ENCODE measurements at regions of chr5 and their contacts with region 1.

Region 1: DNA sequence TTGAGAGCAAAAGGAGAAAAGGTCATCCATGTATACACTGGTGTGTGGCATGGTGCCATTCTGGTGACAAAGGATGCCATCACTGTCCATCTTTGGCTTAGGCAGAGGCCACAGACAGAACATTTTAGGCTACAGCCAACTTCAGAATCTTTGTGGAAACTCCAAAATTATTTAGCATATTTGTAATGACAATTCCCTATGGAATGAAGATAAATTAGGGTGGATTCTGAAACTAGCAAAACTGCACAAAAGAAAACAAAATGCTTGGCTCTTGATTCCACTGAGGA is 92.5 kb downstream of the FBXW11 start:
- DNase-seq: no peak
- H3K4me3 ChIP-seq: no peak overlapping the region
- H3K27ac ChIP-seq: no peak overlapping the region
- H3K4me1 ChIP-seq: peaks cover 2 to 26% (median 6%) of the 10 kb centered on the region in 4 donors
- H3K27me3 ChIP-seq: no peaks in the 10 kb centered on the region
- CTCF ChIP-seq: no peak
- EP300 ChIP-seq: no peak
- POLR2A ChIP-seq: no peak

Region 2: GRCh38 chr5:171806976-171807747 is 106.8 kb before region 1 on chr5:
- in situ Hi-C with region 1: no loop called
- intact Hi-C with region 1: no loop called
- DNase-seq: no peak
- H3K4me3 ChIP-seq: no peak overlapping the region
- H3K27ac ChIP-seq: no peak overlapping the region
- H3K4me1 ChIP-seq: no peaks in the 10 kb centered on the region
- H3K27me3 ChIP-seq: peaks cover 31% of the 10 kb centered on the region
- CTCF ChIP-seq: no peak
- EP300 ChIP-seq: no peak
- POLR2A ChIP-seq: no peak

Region 3: GRCh38 chr5:172035039-172035438 is 121.1 kb after region 1 on chr5:
- in situ Hi-C with region 1: loop called (anchors 10 kb)
- intact Hi-C with region 1: loop called (anchors 10 kb)
- DNase-seq: no peak
- H3K4me3 ChIP-seq: no peak overlapping the region
- H3K27ac ChIP-seq: no peak overlapping the region
- H3K4me1 ChIP-seq: no peaks in the 10 kb centered on the region
- H3K27me3 ChIP-seq: no peaks in the 10 kb centered on the region
- CTCF ChIP-seq: no peak
- EP300 ChIP-seq: no peak
- POLR2A ChIP-seq: no peak

Region 4: DNA sequence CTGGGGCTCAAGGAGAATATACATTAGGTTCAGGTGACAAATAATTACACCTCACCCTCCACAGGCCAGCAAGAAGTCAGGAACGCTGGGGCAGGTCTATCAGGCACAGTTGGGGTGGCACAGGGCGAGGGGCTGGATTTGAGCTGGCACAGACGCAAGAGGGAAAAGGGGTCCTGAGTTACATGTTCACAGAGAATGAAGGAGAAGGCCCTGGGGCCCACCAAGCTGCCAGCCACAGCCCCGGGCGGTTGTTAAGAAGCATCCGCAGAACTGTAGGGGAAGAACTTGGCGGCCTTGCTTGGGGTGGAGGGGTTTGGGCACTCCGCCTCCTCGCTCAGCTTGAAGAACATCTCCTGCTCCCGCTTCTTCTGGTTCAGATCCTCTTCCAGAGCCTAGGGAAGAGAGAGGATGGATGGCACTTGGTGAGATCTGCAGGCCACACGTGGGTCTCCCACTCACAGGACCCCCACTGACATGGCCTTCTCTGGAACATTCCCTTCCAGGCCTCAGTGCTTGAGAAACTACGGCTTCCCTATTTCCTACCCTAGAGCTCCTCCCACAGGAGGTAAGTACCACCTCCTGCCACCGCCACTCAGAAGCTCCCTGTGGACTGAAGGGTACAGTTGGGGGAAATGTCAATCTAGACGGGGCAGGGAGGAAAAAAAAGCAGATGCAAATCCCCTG is 130.8 kb after region 1 on chr5:
- in situ Hi-C with region 1: loop called (anchors 10 kb)
- intact Hi-C with region 1: loop called (anchors 10 kb)
- DNase-seq: no peak
- H3K4me3 ChIP-seq: no peak overlapping the region
- H3K27ac ChIP-seq: no peak overlapping the region
- H3K4me1 ChIP-seq: no peaks in the 10 kb centered on the region
- H3K27me3 ChIP-seq: no peaks in the 10 kb centered on the region
- CTCF ChIP-seq: no peak
- EP300 ChIP-seq: no peak
- POLR2A ChIP-seq: no peak

Region 5: GRCh38 chr5:172065501-172065990 is 151.6 kb after region 1 on chr5:
- in situ Hi-C with region 1: no loop called
- intact Hi-C with region 1: no loop called
- DNase-seq: no peak
- H3K4me3 ChIP-seq: no peak overlapping the region
- H3K27ac ChIP-seq: peak overlapping the region in 1 of 4 donors; percentile 4
- H3K4me1 ChIP-seq: peaks cover 0 to 7% (median 7%) of the 10 kb centered on the region in 4 donors
- H3K27me3 ChIP-seq: no peaks in the 10 kb centered on the region
- CTCF ChIP-seq: no peak
- EP300 ChIP-seq: no peak
- POLR2A ChIP-seq: no peak

Region 6: GRCh38 chr5:172361566-172362238 is 447.8 kb after region 1 on chr5:
- in situ Hi-C with region 1: no loop called
- intact Hi-C with region 1: no loop called
- DNase-seq: no peak
- H3K4me3 ChIP-seq: no peak overlapping the region
- H3K27ac ChIP-seq: no peak overlapping the region
- H3K4me1 ChIP-seq: no peaks in the 10 kb centered on the region
- H3K27me3 ChIP-seq: no peaks in the 10 kb centered on the region
- CTCF ChIP-seq: no peak
- EP300 ChIP-seq: no peak
- POLR2A ChIP-seq: no peak

Measured in transverse colon (tissue), 4 donors.